Endothelial cell of umbilical vein (primary cell): ENCODE measurements at regions of chr11 and their contacts with region 1.

Region 1: GRCh38 chr11:78493413-78493975 is 75.9 kb upstream of the GAB2 start:
- DNase-seq: no peak
- H3K4me3 ChIP-seq: no peak overlapping the region
- H3K27ac ChIP-seq: no peak overlapping the region
- H3K4me1 ChIP-seq: no peaks in the 10 kb centered on the region
- H3K27me3 ChIP-seq: no peaks in the 10 kb centered on the region
- CTCF ChIP-seq: no peak
- POLR2A ChIP-seq: no peak

Region 2: DNA sequence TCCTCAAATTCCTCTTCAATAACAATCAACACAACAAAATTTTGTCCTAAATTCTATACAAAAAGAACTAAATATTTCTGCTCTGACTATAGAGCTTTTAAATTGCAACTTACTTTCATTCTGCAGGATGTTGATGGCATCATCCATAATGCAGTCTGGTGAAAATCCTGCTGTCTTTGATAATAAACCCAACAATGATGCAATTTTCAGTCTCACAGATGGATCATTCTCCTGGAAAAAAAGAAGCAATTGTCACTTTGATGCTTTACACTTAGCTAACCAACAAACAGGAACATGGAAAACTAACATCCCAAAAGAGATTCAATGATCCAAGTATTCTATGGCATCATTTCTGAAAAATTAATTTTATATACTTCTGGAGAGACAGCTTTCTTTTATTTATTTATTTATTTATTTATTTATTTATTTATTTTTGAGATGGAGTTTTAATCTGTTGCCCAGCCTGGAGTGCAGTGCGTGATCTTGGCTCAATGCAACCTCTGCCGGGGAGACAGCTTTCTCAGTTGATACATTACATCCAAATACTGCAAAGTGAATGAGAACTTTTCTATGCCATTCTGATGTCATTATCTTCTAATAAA is 512.0 kb before region 1 on chr11:
- CTCF ChIA-PET with region 1: no interaction called
- POLR2A ChIA-PET with region 1: no interaction called
- dilution Hi-C with region 1: no loop called
- intact Hi-C with region 1: no loop called
- DNase-seq: no peak
- H3K4me3 ChIP-seq: no peak overlapping the region
- H3K27ac ChIP-seq: no peak overlapping the region
- H3K4me1 ChIP-seq: no peaks in the 10 kb centered on the region
- H3K27me3 ChIP-seq: no peaks in the 10 kb centered on the region
- CTCF ChIP-seq: no peak
- POLR2A ChIP-seq: no peak

Region 3: GRCh38 chr11:78397387-78397786 is 96.1 kb before region 1 on chr11:
- CTCF ChIA-PET with region 1: no interaction called
- POLR2A ChIA-PET with region 1: no interaction called
- dilution Hi-C with region 1: no loop called
- intact Hi-C with region 1: no loop called
- DNase-seq: no peak
- H3K4me3 ChIP-seq: no peak overlapping the region
- H3K27ac ChIP-seq: no peak overlapping the region
- H3K4me1 ChIP-seq: peaks cover 4% of the 10 kb centered on the region
- H3K27me3 ChIP-seq: no peaks in the 10 kb centered on the region
- CTCF ChIP-seq: no peak
- POLR2A ChIP-seq: no peak

Region 4: DNA sequence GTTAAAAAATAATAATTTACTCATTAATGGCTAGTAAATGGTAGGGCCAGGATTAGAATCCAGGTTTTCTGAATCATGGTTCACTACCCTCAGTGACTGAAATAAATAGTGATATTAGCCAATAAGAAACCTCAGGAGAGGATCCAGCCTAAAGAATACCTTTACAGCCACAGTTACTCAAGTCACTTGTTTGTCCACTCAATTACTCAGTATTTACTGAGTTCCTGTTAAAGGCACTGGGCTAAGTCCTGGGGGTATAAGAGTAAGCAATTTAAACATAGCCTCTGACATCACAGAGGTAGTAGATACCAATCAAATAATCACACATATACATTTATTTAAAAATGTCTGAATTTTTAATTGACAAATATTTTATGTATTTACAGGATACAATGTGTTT is 19.1 kb before region 1 on chr11:
- CTCF ChIA-PET with region 1: interaction called, 5 read pairs
- POLR2A ChIA-PET with region 1: no interaction called
- dilution Hi-C with region 1: no loop called
- intact Hi-C with region 1: loop called (anchors 2 kb)
- DNase-seq: no peak
- H3K4me3 ChIP-seq: no peak overlapping the region
- H3K27ac ChIP-seq: no peak overlapping the region
- H3K4me1 ChIP-seq: peaks cover 10% of the 10 kb centered on the region
- H3K27me3 ChIP-seq: no peaks in the 10 kb centered on the region
- CTCF ChIP-seq: no peak
- POLR2A ChIP-seq: no peak

Region 5: GRCh38 chr11:78504181-78504580 is 10.7 kb after region 1 on chr11:
- CTCF ChIA-PET with region 1: interaction called, 10 read pairs
- POLR2A ChIA-PET with region 1: no interaction called
- dilution Hi-C with region 1: no loop called
- intact Hi-C with region 1: no loop called
- DNase-seq: no peak
- H3K4me3 ChIP-seq: no peak overlapping the region
- H3K27ac ChIP-seq: no peak overlapping the region
- H3K4me1 ChIP-seq: peaks cover 4% of the 10 kb centered on the region
- H3K27me3 ChIP-seq: no peaks in the 10 kb centered on the region
- CTCF ChIP-seq: no peak
- POLR2A ChIP-seq: no peak